Left ventricle myocardium inferior (tissue), 1 donor: ENCODE measurements at regions of chr3 and their contacts with region 1.

Region 1: DNA sequence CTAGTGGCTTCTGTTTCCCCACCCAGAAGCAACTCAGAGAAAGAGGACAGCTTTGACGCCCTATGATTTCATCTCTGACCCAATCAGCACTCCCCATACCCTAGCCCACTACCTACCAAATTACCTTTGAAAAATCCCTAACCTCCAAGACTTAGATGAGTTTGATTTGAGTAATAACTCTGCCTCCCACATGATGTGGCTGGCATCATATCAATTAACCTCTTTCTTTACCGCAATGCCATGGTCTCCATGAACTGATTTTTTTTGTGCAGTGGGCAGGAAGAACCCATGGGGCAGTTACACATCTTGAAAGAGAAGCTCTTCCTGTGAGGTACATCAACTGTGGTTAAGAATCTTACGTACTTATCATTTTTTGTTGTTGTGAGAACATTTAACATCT is 25.5 kb upstream of the APOD start:
- DNase-seq: no peak
- H3K4me3 ChIP-seq: no peak overlapping the region
- H3K27ac ChIP-seq: no peak overlapping the region
- H3K4me1 ChIP-seq: no peaks in the 10 kb centered on the region
- H3K27me3 ChIP-seq: no peaks in the 10 kb centered on the region
- CTCF ChIP-seq: no peak

Region 2: GRCh38 chr3:193655831-193656433 is 1953.3 kb before region 1 on chr3:
- intact Hi-C with region 1: loop called (anchors 10 kb)
- DNase-seq: no peak
- H3K4me3 ChIP-seq: no peak overlapping the region
- H3K27ac ChIP-seq: peak overlapping the region; percentile 2
- H3K4me1 ChIP-seq: peaks cover 9% of the 10 kb centered on the region
- H3K27me3 ChIP-seq: no peaks in the 10 kb centered on the region
- CTCF ChIP-seq: no peak